Sigmoid colon (tissue), 7 donors: ENCODE measurements at regions of chr2 and their contacts with region 1.

Region 1: GRCh38 chr2:169479257-169480078 is at the start of gene BBS5:
- DNase-seq: peak; percentile 91
- H3K4me3 ChIP-seq: peak within 1 kb of the TSS; percentile 66 to 84 (median 70)
- H3K27ac ChIP-seq: peak within 1 kb of the TSS; percentile 82 to 84 (median 84)
- H3K4me1 ChIP-seq: peaks cover 0 to 7% (median 4%) of the 10 kb centered on the region in 4 donors
- H3K27me3 ChIP-seq: no peaks in the 10 kb centered on the region
- CTCF ChIP-seq: peak in 1 of 4 experiments; percentile 34
- EP300 ChIP-seq: no peak
- POLR2A ChIP-seq: no peak
- total RNA-seq, gene BBS5: 8.2 to 9.5 (median 9.2) TPM

Region 2: DNA sequence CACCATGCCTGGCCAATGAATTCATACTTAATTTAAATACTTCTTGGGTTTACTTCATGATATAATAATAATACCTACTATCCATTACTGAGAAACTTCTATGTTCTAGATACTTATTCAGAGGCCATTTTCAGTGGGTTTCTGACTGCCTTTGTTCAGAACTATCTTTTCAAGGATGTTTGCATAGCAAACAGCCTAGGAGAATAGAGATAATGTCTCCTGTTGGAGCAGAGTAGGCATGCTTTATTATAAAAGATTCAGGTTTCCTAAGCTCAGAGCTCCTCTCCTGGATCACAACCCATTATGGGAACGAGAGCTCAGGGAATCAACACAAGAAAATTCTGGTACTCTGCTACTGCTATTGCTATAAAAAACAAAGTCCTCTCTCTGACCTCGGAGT is 83.1 kb after region 1 on chr2:
- intact Hi-C with region 1: loop called (anchors 10 kb)
- DNase-seq: no peak
- H3K4me3 ChIP-seq: no peak overlapping the region
- H3K27ac ChIP-seq: no peak overlapping the region
- H3K4me1 ChIP-seq: no peaks in the 10 kb centered on the region
- H3K27me3 ChIP-seq: no peaks in the 10 kb centered on the region
- CTCF ChIP-seq: no peak
- EP300 ChIP-seq: no peak
- POLR2A ChIP-seq: no peak